AG04449 (cell line): ENCODE measurements at regions of chr17 and their contacts with region 1.

Region 1: GRCh38 chr17:7004398-7005253 is 7.8 kb upstream of the RNASEK start:
- DNase-seq: no peak
- H3K4me3 ChIP-seq: no peak overlapping the region
- CTCF ChIP-seq: peak; percentile 48

Region 2: DNA sequence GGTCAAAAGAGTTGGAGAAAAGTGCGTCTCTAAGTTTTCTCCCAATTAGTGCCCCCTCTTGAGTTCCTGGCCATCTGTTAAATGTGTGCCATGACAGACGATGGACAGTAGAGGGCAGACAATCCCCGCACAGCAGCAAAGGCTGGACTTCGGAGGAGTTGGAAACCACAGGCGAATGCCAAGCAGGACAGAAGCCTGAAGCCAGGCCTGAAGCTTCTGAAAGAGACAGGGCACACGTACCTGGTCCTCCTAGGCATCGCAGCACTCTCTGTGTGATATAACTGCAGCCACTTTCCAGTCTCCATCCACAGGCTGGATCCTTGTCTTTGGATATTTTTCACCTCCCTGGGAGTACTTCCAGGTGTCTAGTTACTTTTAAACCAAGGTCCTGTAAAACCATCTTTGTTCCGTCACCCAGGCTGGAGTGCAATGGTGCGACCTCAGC is 338.5 kb before region 1 on chr17:
- CTCF ChIA-PET with region 1: interaction called, 32 read pairs
- POLR2A ChIA-PET with region 1: no interaction called
- DNase-seq: no peak
- H3K4me3 ChIP-seq: no peak overlapping the region
- CTCF ChIP-seq: peak; percentile 92

Region 3: DNA sequence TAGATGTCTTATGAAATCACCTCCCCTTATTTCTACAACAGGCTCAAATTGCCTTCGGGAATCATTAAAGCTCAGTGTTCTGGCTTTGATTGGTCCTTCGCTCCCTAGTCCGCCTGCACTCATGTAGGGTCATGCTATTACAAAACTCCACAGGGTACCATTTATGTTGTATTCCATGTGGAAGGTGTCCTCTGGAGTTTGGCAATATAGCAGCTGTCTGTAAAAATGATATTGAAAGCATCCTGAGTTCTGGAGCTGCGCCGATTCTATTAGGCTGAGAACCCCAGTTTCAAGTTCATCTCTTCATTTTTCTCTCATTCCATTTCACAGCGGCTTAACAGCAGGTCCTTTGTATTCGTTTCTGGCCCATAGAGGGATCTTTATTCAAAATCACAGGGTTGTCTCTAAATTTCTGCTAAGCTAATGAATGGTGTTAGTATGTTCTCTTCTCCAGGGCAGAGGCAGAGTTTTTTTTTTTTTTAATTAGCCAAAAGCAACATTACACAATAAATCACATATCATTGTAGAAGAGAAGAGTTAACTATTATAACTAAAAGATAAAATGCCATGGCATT is 101.2 kb before region 1 on chr17:
- CTCF ChIA-PET with region 1: interaction called, 189 read pairs
- POLR2A ChIA-PET with region 1: no interaction called
- DNase-seq: no peak
- H3K4me3 ChIP-seq: no peak overlapping the region
- CTCF ChIP-seq: no peak

Region 4: DNA sequence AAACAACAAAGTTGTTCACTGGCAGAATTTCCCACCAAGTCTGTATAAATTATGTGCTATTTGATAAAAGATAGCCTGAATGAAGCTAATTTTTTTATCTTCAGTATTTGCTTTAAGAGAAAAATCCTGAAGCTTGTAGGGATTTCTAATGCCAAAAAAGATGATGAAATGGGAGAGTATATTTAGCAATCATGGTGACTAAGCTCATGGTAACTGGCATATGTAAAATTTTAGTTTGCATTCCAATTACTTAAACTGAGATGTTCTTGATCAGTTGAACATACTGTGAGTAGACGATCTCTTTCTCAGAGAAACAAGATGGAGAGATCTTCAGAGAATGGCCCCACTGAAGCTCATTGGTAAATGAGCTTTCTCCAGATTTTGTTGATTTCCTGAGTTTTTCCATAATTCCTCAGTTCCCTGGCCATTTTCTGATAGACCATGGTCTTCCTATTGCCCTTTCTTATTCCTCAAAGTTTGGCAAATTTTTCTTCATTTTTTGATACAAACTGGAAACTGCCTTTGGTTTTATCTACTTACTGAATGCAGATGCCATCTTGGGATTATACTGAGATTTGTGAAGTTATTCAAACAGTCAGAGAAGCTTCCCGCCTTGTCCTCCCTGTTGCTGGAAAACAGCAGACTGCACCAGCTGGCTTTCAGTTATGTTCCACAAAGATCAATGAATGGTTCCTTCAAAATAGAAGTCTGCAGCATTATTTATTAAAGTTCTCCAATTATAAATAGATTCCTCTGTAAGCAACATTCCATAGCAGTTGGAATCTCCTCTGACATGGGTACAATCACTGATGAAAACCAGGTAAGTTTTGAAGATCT is 77.1 kb before region 1 on chr17:
- CTCF ChIA-PET with region 1: interaction called, 54 read pairs
- POLR2A ChIA-PET with region 1: no interaction called
- DNase-seq: peak; percentile 5
- H3K4me3 ChIP-seq: no peak overlapping the region
- CTCF ChIP-seq: no peak

Region 5: DNA sequence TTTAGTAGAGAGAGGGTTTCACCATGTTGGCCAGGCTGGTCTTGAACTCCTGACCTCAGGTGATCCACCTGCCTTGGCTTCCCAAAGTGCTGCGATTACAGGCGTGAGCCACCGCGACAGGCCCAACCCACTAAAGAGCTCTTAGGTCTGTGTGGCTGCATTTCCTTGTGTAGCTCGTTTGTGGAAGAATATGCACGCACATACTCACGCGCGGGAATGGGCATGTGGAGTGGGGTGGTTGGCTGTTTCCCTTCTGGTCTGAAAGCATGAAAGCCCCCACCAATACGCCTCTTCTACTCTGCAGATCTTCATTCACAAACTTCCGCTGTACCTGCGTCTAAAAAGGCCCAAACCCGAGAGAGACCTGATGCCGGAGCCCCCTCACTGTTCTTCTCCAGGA is 450.4 kb after region 1 on chr17:
- CTCF ChIA-PET with region 1: no interaction called
- POLR2A ChIA-PET with region 1: no interaction called
- DNase-seq: no peak
- H3K4me3 ChIP-seq: peak overlapping the region; percentile 83
- CTCF ChIP-seq: no peak